ENCODE measurements at regions of chr14 and their contacts with region 1.

Region 1: GRCh38 chr14:105999361-106000028 is 473.1 kb downstream of the TMEM121 start:
- DNase-seq: peak; percentile 85
- H3K4me3 Mint-ChIP-seq: no peak overlapping the region
- H3K27ac Mint-ChIP-seq: peak overlapping the region; percentile 71
- H3K4me1 Mint-ChIP-seq: peaks cover 43% of the 10 kb centered on the region
- H3K27me3 Mint-ChIP-seq: no peaks in the 10 kb centered on the region

Region 2: DNA sequence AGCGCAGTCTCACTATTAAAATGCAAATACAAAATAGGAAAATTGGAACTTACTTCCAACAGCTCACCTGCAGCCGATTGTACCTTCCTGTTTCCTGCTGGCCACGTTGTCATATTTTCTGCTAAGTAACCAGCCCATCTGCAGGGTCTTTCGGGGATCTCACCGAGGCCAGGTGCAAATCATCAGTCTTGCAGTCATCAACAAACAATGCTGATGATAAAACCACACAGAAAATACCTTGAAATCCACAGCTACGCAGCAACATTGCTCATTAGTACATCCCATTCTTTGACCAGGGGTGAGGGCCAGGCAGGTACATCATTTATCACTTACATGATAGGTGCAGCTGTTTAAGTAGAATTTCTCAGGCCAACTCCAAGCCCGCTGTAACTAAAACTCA is 66.3 kb before region 1 on chr14:
- intact Hi-C with region 1: no loop called
- DNase-seq: no peak
- H3K4me3 Mint-ChIP-seq: no peak overlapping the region
- H3K27ac Mint-ChIP-seq: no peak overlapping the region
- H3K4me1 Mint-ChIP-seq: peaks cover 5% of the 10 kb centered on the region
- H3K27me3 Mint-ChIP-seq: peaks cover 36% of the 10 kb centered on the region

Region 3: DNA sequence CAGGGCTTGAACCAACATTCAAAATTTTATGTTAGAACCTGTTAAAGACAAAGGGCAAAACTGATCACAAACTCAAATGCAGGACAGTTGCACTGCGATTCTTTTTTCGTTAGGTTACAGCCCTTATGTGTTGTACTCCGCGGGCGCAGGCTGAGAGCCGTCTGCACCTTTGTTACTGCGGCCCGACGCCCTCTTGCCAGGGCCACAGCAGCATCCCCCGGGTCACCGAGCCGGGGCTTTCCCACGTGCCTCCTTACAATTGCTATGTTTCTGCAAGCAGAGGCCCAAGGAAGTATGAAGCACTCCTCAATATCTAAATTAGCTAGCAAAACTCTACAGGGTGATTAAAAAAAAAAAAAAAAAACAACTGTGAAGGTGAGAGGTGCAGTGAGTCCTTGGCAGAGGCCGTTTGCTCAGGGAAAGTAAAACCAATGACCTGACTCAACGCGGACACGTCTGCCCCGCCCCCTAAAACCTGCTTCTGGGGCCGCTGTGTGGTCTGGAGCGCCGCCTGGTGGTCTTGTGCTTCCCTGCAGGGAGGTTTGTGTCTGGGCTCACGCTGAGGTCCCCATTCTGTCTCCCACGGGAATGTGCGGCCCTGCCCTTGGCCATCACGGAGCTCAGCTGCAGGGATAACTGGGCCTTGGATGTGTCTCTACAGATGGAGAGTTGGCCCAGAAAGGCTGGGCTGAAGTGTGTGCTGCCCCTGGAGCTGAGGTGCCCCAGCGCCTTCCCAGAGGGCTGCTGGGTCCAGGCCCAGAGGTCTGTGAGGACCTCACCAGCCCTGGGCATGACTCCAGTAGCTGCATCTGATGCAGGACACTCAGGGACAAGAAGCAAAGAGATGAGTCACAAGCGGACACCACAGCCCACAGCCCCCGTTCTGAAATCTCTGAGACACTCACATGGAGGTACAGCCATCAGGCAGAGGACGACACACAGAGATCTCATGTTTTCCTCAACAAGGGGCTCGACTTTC is 54.6 kb before region 1 on chr14:
- intact Hi-C with region 1: loop called (anchors 1 kb)
- DNase-seq: peak; percentile 68
- H3K4me3 Mint-ChIP-seq: no peak overlapping the region
- H3K27ac Mint-ChIP-seq: no peak overlapping the region
- H3K4me1 Mint-ChIP-seq: peaks cover 8% of the 10 kb centered on the region
- H3K27me3 Mint-ChIP-seq: peaks cover 9% of the 10 kb centered on the region

Region 4: GRCh38 chr14:105974902-105975301 is 24.6 kb before region 1 on chr14:
- intact Hi-C with region 1: loop called (anchors 1 kb)
- DNase-seq: peak; percentile 31
- H3K4me3 Mint-ChIP-seq: no peak overlapping the region
- H3K27ac Mint-ChIP-seq: no peak overlapping the region
- H3K4me1 Mint-ChIP-seq: no peaks in the 10 kb centered on the region
- H3K27me3 Mint-ChIP-seq: peaks cover 9% of the 10 kb centered on the region

Region 5: GRCh38 chr14:106039400-106039799 is 39.9 kb after region 1 on chr14:
- intact Hi-C with region 1: loop called (anchors 2 kb)
- DNase-seq: peak; percentile 32
- H3K4me3 Mint-ChIP-seq: no peak overlapping the region
- H3K27ac Mint-ChIP-seq: no peak overlapping the region
- H3K4me1 Mint-ChIP-seq: peaks cover 14% of the 10 kb centered on the region
- H3K27me3 Mint-ChIP-seq: peaks cover 4% of the 10 kb centered on the region

Region 6: GRCh38 chr14:106599209-106599608 is 599.7 kb after region 1 on chr14:
- intact Hi-C with region 1: no loop called
- DNase-seq: no peak
- H3K4me3 Mint-ChIP-seq: no peak overlapping the region
- H3K27ac Mint-ChIP-seq: no peak overlapping the region
- H3K4me1 Mint-ChIP-seq: no peaks in the 10 kb centered on the region
- H3K27me3 Mint-ChIP-seq: peaks cover 54% of the 10 kb centered on the region